Activated T-helper 1 cell treated with anti-CD3 and anti-CD28 coated beads, Interleukin-12 subunit alpha, Interleukin-12 subunit beta, Interleukin-2, Interleukin-4 antibody, amounts not matched to agents 30 ng/mL and 10 ng/mL and 1 ng/mL, durations not matched to agents 14 hours and 24 hours and 36 hours (primary cell): ENCODE measurements at regions of chr5 and their contacts with region 1.

Region 1: DNA sequence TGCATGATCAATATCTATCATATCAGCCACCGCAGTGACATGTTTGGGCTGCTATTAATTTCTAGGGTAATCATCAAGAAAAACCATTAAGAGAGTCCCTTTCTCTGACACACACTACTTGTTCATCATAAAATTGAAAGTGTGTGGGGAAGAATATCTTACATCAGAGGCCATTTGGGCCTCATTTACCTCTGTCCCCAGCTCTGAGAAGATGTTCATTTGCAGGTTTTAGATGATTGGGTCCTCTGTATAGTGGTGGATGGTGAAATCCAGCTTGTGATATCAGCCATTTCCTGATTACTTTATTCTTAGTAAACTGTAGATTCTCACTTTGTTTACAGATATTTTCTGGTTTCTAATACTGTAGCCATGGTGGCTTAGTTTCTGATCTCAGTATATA is 29.8 kb upstream of the PJA2 start:
- DNase-seq: no peak
- H3K4me3 Mint-ChIP-seq: no peak overlapping the region
- H3K27ac Mint-ChIP-seq: no peak overlapping the region
- H3K4me1 Mint-ChIP-seq: no peaks in the 10 kb centered on the region
- H3K27me3 Mint-ChIP-seq: no peaks in the 10 kb centered on the region

Region 2: GRCh38 chr5:108521841-108522506 is 917.6 kb before region 1 on chr5:
- intact Hi-C with region 1: loop called (anchors 2 kb)
- DNase-seq: no peak
- H3K4me3 Mint-ChIP-seq: no peak overlapping the region
- H3K27ac Mint-ChIP-seq: no peak overlapping the region
- H3K4me1 Mint-ChIP-seq: no peaks in the 10 kb centered on the region
- H3K27me3 Mint-ChIP-seq: peaks cover 3% of the 10 kb centered on the region

Region 3: DNA sequence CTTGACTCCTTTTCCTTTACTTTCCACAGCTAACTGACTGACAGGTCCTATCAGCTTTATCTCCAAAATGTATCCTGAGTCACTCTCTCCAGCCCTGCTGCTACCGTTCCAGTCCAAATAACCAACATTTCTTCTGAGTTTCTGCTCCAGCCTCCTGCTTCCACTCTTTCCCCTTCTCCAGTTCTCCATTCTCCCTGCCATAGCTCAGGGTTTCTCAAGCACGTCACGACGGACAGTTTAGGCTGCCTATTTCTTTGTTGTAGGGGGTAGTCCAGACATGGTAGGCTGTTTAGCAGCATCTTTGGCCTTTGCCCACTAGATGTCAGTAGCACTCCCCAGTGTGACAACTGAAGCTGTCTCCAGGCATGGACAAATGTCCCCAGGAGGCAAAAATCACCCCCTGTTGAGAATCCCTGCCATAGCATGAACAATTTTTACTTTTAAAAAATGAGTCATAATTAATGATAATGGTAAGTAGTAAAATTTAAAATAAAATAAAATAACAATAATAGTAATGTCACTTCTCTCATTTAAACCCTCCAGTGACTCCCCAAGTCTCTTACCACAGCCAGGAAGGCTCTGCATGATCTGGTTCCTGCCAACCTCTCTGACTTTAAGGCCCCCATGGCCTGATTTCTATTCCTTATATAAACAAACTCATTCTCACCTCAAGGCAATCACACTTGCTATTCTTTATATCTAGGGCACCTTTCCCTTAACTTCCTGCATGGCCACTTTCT is 797.3 kb before region 1 on chr5:
- intact Hi-C with region 1: loop called (anchors 2 kb)
- DNase-seq: peak; percentile 11
- H3K4me3 Mint-ChIP-seq: no peak overlapping the region
- H3K27ac Mint-ChIP-seq: no peak overlapping the region
- H3K4me1 Mint-ChIP-seq: peaks cover 5% of the 10 kb centered on the region
- H3K27me3 Mint-ChIP-seq: peaks cover 7% of the 10 kb centered on the region

Region 4: GRCh38 chr5:108919591-108920326 is 519.8 kb before region 1 on chr5:
- intact Hi-C with region 1: loop called (anchors 5 kb)
- DNase-seq: no peak
- H3K4me3 Mint-ChIP-seq: no peak overlapping the region
- H3K27ac Mint-ChIP-seq: no peak overlapping the region
- H3K4me1 Mint-ChIP-seq: no peaks in the 10 kb centered on the region
- H3K27me3 Mint-ChIP-seq: no peaks in the 10 kb centered on the region

Region 5: DNA sequence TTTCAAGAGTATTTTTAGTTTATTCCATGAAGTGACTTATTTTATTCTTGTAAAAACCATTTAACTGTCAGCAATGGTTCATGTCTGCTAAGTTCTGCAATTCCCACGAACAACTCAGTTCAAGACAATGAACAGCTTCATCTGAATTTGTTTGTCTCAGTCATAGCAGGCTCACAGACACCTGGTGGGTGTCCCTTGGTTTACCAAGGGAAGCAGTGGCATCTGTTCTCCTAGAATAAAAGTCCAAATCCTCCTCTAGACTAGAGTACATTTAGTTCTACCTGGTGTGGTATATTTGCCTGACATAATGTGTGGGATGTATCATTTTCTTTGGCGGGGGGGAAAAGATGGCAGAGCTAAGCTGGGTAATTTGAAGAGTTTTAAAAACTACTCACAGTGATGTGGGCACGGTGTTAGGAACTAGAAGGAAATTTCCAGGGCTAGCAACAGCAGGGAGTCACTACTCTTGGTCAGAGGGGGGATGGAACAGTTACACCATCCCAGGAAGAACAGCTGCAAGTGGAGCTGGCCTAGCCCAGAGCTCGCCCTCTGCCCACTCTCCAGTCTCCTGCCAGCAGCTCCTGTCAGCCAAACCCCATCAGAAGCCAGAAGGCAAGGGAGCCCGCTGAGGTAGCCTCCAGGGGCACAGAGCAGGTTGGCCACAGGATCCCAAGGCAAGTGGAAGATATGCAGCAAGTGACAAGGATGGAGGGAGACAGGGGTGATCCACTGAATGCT is 130.1 kb before region 1 on chr5:
- intact Hi-C with region 1: loop called (anchors 5 kb)
- DNase-seq: no peak
- H3K4me3 Mint-ChIP-seq: no peak overlapping the region
- H3K27ac Mint-ChIP-seq: no peak overlapping the region
- H3K4me1 Mint-ChIP-seq: no peaks in the 10 kb centered on the region
- H3K27me3 Mint-ChIP-seq: peaks cover 3% of the 10 kb centered on the region